ENCODE measurements at regions of chr9 and their contacts with region 1.

Region 1: GRCh38 chr9:122125158-122125508 is 32.0 kb upstream of the TTLL11 start:
- DNase-seq: peak; percentile 87
- H3K4me3 ChIP-seq: no peak overlapping the region
- H3K27ac ChIP-seq: peak overlapping the region in 1 of 4 donors; percentile 60
- H3K4me1 ChIP-seq: peaks cover 0 to 27% (median 21%) of the 10 kb centered on the region in 4 donors
- H3K27me3 ChIP-seq: peaks cover 0 to 10% (median 0%) of the 10 kb centered on the region in 3 donors
- CTCF ChIP-seq: peak; percentile 88 to 96 (median 94)
- EP300 ChIP-seq: no peak
- POLR2A ChIP-seq: no peak

Region 2: DNA sequence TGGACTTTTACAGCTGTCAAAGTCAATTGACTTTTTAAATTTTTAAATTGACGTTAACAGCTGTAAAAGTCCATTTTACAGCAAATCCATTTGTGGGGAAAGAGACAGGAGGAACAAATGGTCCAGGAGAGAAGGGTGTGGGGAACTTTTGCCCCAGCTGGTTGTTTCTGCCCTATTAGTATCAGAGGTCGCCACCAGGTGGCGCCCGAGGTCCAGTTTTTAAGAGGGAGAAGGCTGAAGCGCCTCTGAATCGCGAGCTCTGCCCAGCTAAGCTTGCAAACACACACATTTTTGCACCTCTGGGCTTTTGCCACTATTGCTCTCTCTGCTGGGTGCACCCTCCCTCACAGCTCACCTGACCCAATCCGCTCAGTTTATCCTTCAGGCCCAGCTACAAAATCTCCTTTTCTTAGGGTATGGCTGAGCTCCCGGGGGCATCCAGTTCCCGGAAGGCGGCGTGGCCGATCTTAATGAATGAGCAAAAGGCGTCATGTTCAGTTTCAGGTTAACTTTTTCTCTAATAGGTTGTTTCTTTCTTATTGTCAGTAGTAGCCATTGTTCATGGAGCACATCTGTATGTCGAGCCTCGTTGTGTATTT is 25.8 kb before region 1 on chr9:
- intact Hi-C with region 1: loop called (anchors 1 kb)
- DNase-seq: peak; percentile 92
- H3K4me3 ChIP-seq: no peak overlapping the region
- H3K27ac ChIP-seq: no peak overlapping the region
- H3K4me1 ChIP-seq: peaks cover 0 to 4% (median 4%) of the 10 kb centered on the region in 4 donors
- H3K27me3 ChIP-seq: no peaks in the 10 kb centered on the region
- CTCF ChIP-seq: peak; percentile 47 to 88 (median 78)
- EP300 ChIP-seq: no peak
- POLR2A ChIP-seq: no peak

Region 3: DNA sequence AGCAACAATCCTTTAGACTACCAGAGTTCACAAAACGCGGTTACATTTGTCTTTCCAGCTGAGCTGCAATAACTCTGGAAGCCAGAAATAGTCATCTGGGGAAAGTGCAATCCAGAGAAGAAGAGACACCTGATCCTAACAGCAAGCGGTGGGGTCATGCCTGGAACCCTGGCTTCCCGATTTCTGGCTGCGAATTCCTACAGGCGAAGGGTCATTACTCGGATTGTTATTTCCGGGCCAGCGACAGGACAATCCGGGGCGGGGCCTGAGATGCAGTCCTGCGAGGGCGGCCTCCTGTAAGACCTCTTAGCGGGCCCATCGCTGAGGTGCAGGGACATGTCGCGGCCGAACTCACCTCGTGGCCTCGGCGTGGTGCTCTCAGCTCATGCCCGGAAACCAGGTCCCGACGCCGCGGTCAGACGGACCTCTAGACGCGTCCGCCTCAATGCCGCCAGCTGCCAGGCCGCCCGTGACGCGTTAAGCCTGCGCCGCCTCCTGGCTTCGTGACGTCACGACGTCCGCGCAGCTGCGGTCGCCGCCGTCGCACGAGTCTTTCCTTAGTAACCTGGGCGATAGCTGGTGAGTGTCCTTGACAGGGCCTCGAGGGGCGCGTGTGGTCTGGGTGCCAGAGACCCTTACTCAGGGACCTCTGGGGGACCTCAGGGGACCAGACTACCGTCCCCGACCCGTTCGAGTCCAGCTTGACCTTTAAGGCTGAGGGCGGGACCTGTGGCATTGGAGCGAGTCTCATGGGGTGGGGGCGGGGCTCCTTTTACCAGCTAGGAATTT is 139.4 kb after region 1 on chr9 and contains the starts of genes MRRF and RBM18:
- intact Hi-C with region 1: loop called (anchors 5 kb)
- DNase-seq: peak; percentile 95
- H3K4me3 ChIP-seq: peak within 1 kb of the TSS; percentile 56 to 84 (median 70)
- H3K27ac ChIP-seq: peak within 1 kb of the TSS; percentile 86 to 93 (median 92)
- H3K4me1 ChIP-seq: peaks cover 0 to 42% (median 39%) of the 10 kb centered on the region in 4 donors
- H3K27me3 ChIP-seq: no peaks in the 10 kb centered on the region
- CTCF ChIP-seq: no peak
- EP300 ChIP-seq: peak in 1 of 4 donors; percentile 16
- POLR2A ChIP-seq: peak in 1 of 2 donors; percentile 63
- total RNA-seq, gene MRRF: 29.9 to 40.7 (median 33.9) TPM
- total RNA-seq, gene RBM18: 11.9 to 16.8 (median 13.0) TPM

Region 4: GRCh38 chr9:122350638-122351355 is 225.7 kb after region 1 on chr9:
- intact Hi-C with region 1: loop called (anchors 1 kb)
- DNase-seq: peak; percentile 90
- H3K4me3 ChIP-seq: no peak overlapping the region
- H3K27ac ChIP-seq: no peak overlapping the region
- H3K4me1 ChIP-seq: peaks cover 0 to 23% (median 13%) of the 10 kb centered on the region in 4 donors
- H3K27me3 ChIP-seq: no peaks in the 10 kb centered on the region
- CTCF ChIP-seq: peak; percentile 87 to 98 (median 96)
- EP300 ChIP-seq: no peak
- POLR2A ChIP-seq: no peak

Region 5: GRCh38 chr9:122453677-122454135 is 328.6 kb after region 1 on chr9:
- intact Hi-C with region 1: loop called (anchors 5 kb)
- DNase-seq: no peak
- H3K4me3 ChIP-seq: no peak overlapping the region
- H3K27ac ChIP-seq: no peak overlapping the region
- H3K4me1 ChIP-seq: peaks cover 0 to 22% (median 7%) of the 10 kb centered on the region in 4 donors
- H3K27me3 ChIP-seq: no peaks in the 10 kb centered on the region
- CTCF ChIP-seq: no peak
- EP300 ChIP-seq: no peak
- POLR2A ChIP-seq: no peak

Region 6: GRCh38 chr9:122810306-122810946 is 685.3 kb after region 1 on chr9:
- intact Hi-C with region 1: loop called (anchors 5 kb)
- DNase-seq: peak; percentile 82
- H3K4me3 ChIP-seq: no peak overlapping the region
- H3K27ac ChIP-seq: no peak overlapping the region
- H3K4me1 ChIP-seq: peaks cover 0 to 5% (median 0%) of the 10 kb centered on the region in 4 donors
- H3K27me3 ChIP-seq: no peaks in the 10 kb centered on the region
- CTCF ChIP-seq: peak; percentile 67 to 84 (median 71)
- EP300 ChIP-seq: no peak
- POLR2A ChIP-seq: no peak